WTC11 (cell line): ENCODE measurements at regions of chr14 and their contacts with region 1.

Region 1: DNA sequence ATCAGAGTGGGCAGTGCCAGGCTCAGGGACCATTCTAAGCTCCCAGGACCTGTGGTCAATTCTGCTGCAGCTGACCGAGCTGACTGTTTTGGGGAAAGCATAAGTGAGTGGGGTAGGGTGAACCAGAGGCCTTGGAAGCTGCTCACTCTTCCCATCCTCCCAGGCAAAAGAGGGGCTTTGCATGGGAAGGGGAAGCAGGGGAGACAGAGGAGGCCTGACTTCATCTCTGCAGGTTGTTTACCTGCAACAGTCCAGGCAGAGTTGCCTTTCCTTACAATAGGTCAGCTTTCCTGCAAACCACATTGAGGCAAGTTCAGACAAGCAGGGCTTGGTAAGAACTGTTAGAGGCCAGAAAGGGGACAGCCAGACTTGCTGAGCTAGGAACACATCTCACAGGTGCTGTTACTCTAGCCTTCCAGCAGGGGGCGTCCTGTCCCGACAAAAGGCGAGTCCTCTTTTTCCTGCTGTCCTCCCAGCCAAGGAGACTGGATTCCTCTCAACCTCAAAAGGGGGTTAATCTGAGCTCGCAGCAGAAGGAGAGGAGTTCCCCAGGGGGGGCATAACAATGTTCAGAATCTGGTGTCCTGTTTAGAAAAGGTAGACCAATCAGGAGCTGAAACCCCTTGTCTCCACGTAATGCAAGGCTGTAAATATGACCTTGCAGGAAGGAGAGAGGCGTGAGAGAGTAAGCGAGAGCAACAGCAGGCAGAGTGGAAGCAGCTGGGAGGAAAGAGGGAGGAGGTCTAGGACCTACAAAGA is 4.3 kb upstream of the DHRS2 start:
- DNase-seq: peak; percentile 90
- ATAC-seq: peak; percentile 86
- H3K4me3 Mint-ChIP-seq: no peak overlapping the region
- H3K27ac Mint-ChIP-seq: no peak overlapping the region
- H3K4me1 Mint-ChIP-seq: peaks cover 19% of the 10 kb centered on the region
- H3K27me3 Mint-ChIP-seq: peaks cover 3% of the 10 kb centered on the region
- CTCF ChIP-seq: peak; percentile 96

Region 2: DNA sequence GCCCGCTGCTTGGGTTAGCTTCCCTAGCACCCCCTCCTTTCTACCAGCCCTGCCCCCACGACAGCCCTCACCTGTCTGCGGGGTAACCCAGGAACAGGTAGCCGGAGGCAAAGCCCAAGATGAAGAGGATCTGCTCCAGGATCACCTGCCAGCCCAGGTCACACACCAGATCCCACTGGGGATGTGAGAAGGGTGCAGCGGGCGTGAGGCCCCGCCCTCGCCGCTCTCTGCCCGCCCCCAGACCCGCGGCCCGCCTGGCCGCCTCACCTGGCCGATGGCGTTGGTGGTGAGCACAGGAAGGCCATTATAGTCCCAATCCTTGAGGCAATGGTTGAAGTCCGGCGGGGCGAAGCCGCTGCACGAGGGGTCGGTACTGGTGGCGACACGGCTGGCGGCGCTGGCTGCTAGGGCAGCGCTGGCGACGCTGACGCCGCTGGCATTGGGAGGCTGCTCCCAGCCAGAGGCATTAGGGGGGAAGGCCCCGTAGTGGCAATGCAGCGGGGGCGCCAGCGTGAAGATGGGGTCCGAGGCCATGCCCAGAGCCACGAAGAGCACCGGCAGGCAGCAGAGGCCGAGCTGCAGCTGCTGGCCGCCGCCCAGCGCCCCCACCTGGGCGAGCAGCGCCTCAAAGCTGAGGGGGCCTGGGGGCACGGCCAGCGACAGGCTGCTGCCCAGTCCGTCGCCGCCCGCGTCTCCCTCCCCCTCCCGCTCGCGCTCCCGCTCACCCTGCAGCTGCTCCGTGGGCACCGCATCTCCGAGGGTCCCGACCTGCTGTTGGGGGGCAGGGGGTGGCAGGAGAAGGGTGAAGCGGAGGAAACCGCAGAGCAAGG is 280.0 kb before region 1 on chr14:
- CTCF ChIA-PET with region 1: no interaction called
- POLR2A ChIA-PET with region 1: no interaction called
- DNase-seq: peak; percentile 54
- ATAC-seq: peak; percentile 49
- H3K4me3 Mint-ChIP-seq: peak overlapping the region; percentile 63
- H3K27ac Mint-ChIP-seq: no peak overlapping the region
- H3K4me1 Mint-ChIP-seq: peaks cover 11% of the 10 kb centered on the region
- H3K27me3 Mint-ChIP-seq: peaks cover 43% of the 10 kb centered on the region
- CTCF ChIP-seq: no peak

Region 3: GRCh38 chr14:23605931-23606585 is 25.8 kb before region 1 on chr14:
- CTCF ChIA-PET with region 1: interaction called, 69 read pairs
- POLR2A ChIA-PET with region 1: no interaction called
- DNase-seq: no peak
- ATAC-seq: no peak
- H3K4me3 Mint-ChIP-seq: no peak overlapping the region
- H3K27ac Mint-ChIP-seq: no peak overlapping the region
- H3K4me1 Mint-ChIP-seq: no peaks in the 10 kb centered on the region
- H3K27me3 Mint-ChIP-seq: peaks cover 19% of the 10 kb centered on the region
- CTCF ChIP-seq: no peak

Region 4: DNA sequence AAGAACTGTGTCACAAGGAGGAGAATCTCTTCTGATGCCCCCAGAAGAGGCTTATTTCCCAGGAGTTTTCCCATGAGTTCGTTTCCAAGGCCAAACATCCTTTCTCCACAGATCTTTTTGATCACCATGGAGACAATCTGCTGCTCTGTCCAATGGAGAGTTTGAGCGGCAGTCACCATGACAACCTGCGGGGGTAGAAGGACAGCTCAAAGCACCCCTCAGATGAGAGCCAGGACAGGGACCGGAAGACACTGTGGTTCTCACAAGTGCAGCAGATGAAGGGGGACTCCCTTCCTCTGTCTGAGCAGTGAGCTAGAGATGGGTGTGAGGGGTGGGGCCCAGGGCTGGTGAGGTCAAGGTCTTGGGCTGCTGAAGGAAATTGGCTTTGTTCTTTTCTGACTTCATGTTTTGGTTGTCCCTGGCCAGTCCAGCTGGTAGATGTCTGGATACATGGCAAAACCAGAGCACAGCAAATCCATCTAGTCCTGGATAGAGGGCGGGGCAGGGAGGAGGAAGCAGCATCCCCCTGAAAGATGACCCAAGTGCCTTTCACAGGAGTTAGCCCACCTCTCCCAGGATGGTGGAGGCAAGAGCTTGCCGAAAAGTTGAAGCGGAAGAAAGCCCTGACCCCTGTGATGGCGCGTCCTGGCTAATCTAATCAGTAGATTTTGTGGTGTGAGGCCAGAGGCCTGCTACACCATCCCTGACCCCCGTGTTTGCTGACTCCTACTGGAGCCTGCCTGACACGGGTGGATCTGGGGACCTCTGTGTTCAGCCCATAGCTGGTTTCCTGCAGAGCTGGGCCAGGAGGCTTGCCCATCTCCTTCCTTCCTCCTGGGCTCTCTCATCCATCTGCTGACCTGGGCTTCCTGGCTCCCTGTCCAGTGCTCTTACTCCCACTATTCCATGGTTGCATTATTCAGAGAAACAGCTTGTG is 28.7 kb after region 1 on chr14:
- CTCF ChIA-PET with region 1: interaction called, 69 read pairs
- POLR2A ChIA-PET with region 1: interaction called, 3 read pairs
- DNase-seq: no peak
- ATAC-seq: no peak
- H3K4me3 Mint-ChIP-seq: no peak overlapping the region
- H3K27ac Mint-ChIP-seq: no peak overlapping the region
- H3K4me1 Mint-ChIP-seq: no peaks in the 10 kb centered on the region
- H3K27me3 Mint-ChIP-seq: peaks cover 3% of the 10 kb centered on the region; the same call in 1 of the 2 replicates
- CTCF ChIP-seq: no peak

Region 5: GRCh38 chr14:23694085-23694975 is 62.4 kb after region 1 on chr14:
- CTCF ChIA-PET with region 1: interaction called, 33 read pairs
- POLR2A ChIA-PET with region 1: interaction called, 5 read pairs
- DNase-seq: peak; percentile 37
- ATAC-seq: peak; percentile 68
- H3K4me3 Mint-ChIP-seq: no peak overlapping the region
- H3K27ac Mint-ChIP-seq: no peak overlapping the region
- H3K4me1 Mint-ChIP-seq: 0 out of 2 replicates have a peak, but pooled peaks cover 3% of the 10 kb centered on the region
- H3K27me3 Mint-ChIP-seq: peaks cover 6% of the 10 kb centered on the region
- CTCF ChIP-seq: no peak

Region 6: DNA sequence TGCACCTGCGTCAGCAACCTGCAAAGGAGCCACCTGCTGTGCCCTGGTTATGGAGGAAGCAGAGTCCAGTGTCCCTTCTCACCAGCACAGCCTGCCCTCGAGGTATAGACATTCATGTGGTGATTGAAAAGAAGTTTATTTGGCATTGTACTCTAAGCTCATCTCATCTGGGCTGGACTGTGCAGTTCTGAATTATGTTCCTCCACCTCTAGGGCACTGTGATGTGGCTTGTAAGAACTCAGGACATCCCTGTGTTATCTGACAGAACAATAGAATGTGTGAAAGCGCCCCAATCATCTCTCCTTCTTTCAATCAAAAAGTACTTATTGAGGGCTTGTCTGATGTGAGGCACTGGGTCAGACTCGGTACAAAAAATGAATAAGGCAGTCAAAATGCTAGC is 144.4 kb after region 1 on chr14:
- CTCF ChIA-PET with region 1: interaction called, 14 read pairs
- POLR2A ChIA-PET with region 1: no interaction called
- DNase-seq: no peak
- ATAC-seq: no peak
- H3K4me3 Mint-ChIP-seq: no peak overlapping the region
- H3K27ac Mint-ChIP-seq: no peak overlapping the region
- H3K4me1 Mint-ChIP-seq: peaks cover 3% of the 10 kb centered on the region; the same call in 1 of the 2 replicates
- H3K27me3 Mint-ChIP-seq: no peaks in the 10 kb centered on the region; the same call in 1 of the 2 replicates
- CTCF ChIP-seq: no peak

Region 7: GRCh38 chr14:23789696-23790095 is 157.8 kb after region 1 on chr14:
- CTCF ChIA-PET with region 1: no interaction called
- POLR2A ChIA-PET with region 1: no interaction called
- DNase-seq: no peak
- ATAC-seq: no peak
- H3K4me3 Mint-ChIP-seq: no peak overlapping the region
- H3K27ac Mint-ChIP-seq: no peak overlapping the region
- H3K4me1 Mint-ChIP-seq: no peaks in the 10 kb centered on the region
- H3K27me3 Mint-ChIP-seq: peaks cover 13% of the 10 kb centered on the region; the same call in 1 of the 2 replicates
- CTCF ChIP-seq: no peak

Region 8: GRCh38 chr14:23916004-23916403 is 284.1 kb after region 1 on chr14:
- CTCF ChIA-PET with region 1: interaction called, 177 read pairs
- POLR2A ChIA-PET with region 1: interaction called, 3 read pairs
- DNase-seq: no peak
- ATAC-seq: no peak
- H3K4me3 Mint-ChIP-seq: no peak overlapping the region
- H3K27ac Mint-ChIP-seq: no peak overlapping the region
- H3K4me1 Mint-ChIP-seq: peaks cover 7% of the 10 kb centered on the region
- H3K27me3 Mint-ChIP-seq: peaks cover 2% of the 10 kb centered on the region; the same call in 1 of the 2 replicates
- CTCF ChIP-seq: no peak

Region 9: DNA sequence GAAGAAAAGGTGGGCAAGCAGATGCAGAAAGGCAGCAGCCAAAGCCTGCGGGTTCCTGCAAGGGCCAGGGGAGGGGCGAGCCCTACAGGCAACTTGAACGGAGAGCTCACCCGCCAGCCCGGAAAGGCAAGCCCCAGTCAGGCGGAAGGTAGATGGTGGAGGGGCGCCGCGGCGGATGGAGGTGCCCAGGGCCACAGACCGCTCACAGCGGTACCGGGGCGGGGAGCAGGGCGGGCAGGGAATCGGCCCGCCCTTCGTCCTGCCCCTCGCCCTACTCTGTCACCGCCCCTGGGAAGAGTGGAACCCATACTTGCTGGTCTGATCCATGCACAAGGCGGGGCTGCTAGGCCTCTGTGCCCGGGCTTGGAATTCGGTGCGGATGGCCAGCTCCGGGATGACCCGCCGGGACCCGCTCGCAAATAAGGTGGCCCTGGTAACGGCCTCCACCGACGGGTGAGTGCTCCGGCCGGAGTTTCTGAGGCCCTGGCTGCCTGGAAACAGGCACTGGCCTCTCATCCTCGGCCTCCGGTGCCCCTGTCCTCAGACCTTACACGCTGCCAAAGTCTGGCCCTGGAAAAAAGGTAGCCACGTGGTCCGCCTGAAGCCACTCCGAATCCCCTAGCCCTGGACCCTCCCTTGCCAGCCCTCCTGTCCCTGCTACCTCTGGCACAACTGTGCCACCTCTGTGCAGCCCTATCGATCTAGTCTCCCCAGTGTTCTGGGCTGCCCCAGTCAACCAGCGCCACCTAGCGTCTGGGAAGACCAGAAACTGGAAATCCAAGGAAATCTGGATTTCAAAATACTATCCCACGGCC is 321.8 kb after region 1 on chr14 and contains the start of gene DHRS4:
- CTCF ChIA-PET with region 1: interaction called, 28 read pairs
- POLR2A ChIA-PET with region 1: no interaction called
- DNase-seq: peak; percentile 82
- ATAC-seq: peak; percentile 95
- H3K4me3 Mint-ChIP-seq: peak within 1 kb of the TSS; percentile 87
- H3K27ac Mint-ChIP-seq: peak within 1 kb of the TSS; percentile 84
- H3K4me1 Mint-ChIP-seq: peaks cover 26% of the 10 kb centered on the region
- H3K27me3 Mint-ChIP-seq: peaks cover 2% of the 10 kb centered on the region; the same call in 1 of the 2 replicates
- CTCF ChIP-seq: peak; percentile 84
- total RNA-seq, gene DHRS4: 14.5 to 14.9 TPM (median 14.8 TPM) in 3 replicates